ENCODE measurements at regions of chr10 and their contacts with region 1.

Region 1: GRCh38 chr10:80530251-80530650 is 7.5 kb upstream of the SH2D4B start:
- DNase-seq: peak; percentile 62 to 67
- H3K4me3 ChIP-seq: no peak overlapping the region
- H3K27ac ChIP-seq: no peak overlapping the region
- H3K4me1 ChIP-seq: no peaks in the 10 kb centered on the region
- H3K27me3 ChIP-seq: no peaks in the 10 kb centered on the region
- CTCF ChIP-seq: peak; percentile 75

Region 2: GRCh38 chr10:80260295-80261243 is 269.7 kb before region 1 on chr10:
- CTCF ChIA-PET with region 1: no interaction called
- POLR2A ChIA-PET with region 1: no interaction called
- intact Hi-C with region 1: loop called (anchors 5 kb)
- DNase-seq: peak in 1 of 2 experiments; percentile 45
- H3K4me3 ChIP-seq: no peak overlapping the region
- H3K27ac ChIP-seq: no peak overlapping the region
- H3K4me1 ChIP-seq: no peaks in the 10 kb centered on the region
- H3K27me3 ChIP-seq: no peaks in the 10 kb centered on the region; the same call in 1 of the 2 replicates
- CTCF ChIP-seq: peak; percentile 98

Region 3: GRCh38 chr10:80504158-80504811 is 26.0 kb before region 1 on chr10:
- CTCF ChIA-PET with region 1: interaction called, 5 read pairs
- POLR2A ChIA-PET with region 1: no interaction called
- intact Hi-C with region 1: loop called (anchors 2 kb)
- DNase-seq: peak; percentile 41 to 65
- H3K4me3 ChIP-seq: peak overlapping the region; percentile 8; the same call in 1 of the 2 replicates
- H3K27ac ChIP-seq: peak overlapping the region; percentile 99
- H3K4me1 ChIP-seq: peaks cover 100% of the 10 kb centered on the region
- H3K27me3 ChIP-seq: no peaks in the 10 kb centered on the region
- CTCF ChIP-seq: no peak

Region 4: DNA sequence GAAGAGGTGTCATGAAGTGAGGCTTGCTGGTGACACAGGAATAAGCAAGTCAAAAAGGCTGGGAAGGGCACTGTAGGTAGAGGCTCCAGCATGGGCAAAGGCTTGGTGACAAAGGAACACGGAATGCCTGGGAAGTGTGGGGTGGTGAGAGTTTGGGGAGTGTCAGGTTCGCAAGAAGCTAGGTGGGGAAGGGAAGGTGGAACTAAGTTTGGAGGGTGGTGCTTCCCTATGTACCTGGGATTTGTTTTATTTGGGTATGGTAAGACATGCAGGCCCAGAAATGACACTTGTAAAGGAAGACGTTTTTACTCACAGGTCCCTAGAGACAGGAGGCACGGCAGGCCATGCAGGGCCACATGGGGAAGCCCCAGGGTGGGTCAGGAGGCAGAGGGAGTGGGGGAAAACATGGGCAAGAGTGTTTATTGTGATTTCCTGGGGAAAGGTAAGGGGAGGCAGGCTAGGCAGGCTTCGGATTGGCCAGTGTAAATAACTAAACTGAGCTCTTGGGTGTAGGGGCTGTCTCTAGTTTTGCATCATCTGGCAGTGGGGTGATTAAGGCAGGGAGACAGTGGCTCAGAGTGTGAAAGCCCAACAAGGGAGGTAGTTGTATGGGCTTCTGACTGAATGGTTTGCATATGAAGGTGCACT is 59.6 kb after region 1 on chr10:
- CTCF ChIA-PET with region 1: no interaction called
- POLR2A ChIA-PET with region 1: no interaction called
- intact Hi-C with region 1: no loop called
- DNase-seq: no peak
- H3K4me3 ChIP-seq: no peak overlapping the region
- H3K27ac ChIP-seq: no peak overlapping the region
- H3K4me1 ChIP-seq: no peaks in the 10 kb centered on the region
- H3K27me3 ChIP-seq: peaks cover 9% of the 10 kb centered on the region; the same call in 1 of the 2 replicates
- CTCF ChIP-seq: no peak